PC-9 (cell line): ENCODE measurements at regions of chr7 and their contacts with region 1.

Region 1: DNA sequence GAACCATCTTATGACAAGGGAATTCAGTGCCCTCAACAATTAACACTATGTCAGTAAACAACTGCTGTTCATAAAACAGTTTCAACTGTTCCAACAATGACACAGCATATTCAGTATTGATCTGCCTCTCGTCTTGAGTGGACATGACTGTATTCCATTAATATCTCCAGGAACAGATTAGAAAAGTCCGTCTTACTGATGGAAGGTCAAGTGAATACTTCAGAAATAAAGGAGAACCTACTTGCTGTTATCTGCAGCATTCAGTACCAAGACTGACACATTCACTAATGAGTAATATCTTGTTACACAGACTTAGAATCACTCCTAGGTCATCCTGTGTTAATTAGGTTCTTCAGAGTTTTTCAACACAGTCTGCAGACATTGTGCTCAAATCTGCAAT is 12.1 kb downstream of the KBTBD2 start:
- DNase-seq: no peak
- H3K4me3 ChIP-seq: no peak overlapping the region
- H3K27ac ChIP-seq: peak overlapping the region; percentile 28
- H3K4me1 ChIP-seq: peaks cover 15% of the 10 kb centered on the region
- H3K27me3 ChIP-seq: no peaks in the 10 kb centered on the region
- CTCF ChIP-seq: no peak

Region 2: GRCh38 chr7:32179567-32179966 is 699.9 kb before region 1 on chr7:
- CTCF ChIA-PET with region 1: interaction called, 27 read pairs
- POLR2A ChIA-PET with region 1: no interaction called
- intact Hi-C with region 1: no loop called
- DNase-seq: no peak
- H3K4me3 ChIP-seq: no peak overlapping the region
- H3K27ac ChIP-seq: no peak overlapping the region
- H3K4me1 ChIP-seq: no peaks in the 10 kb centered on the region
- H3K27me3 ChIP-seq: 0 out of 2 replicates have a peak, but pooled peaks cover 6% of the 10 kb centered on the region
- CTCF ChIP-seq: no peak

Region 3: GRCh38 chr7:32905175-32905662 is 25.8 kb after region 1 on chr7:
- CTCF ChIA-PET with region 1: no interaction called
- POLR2A ChIA-PET with region 1: no interaction called
- intact Hi-C with region 1: no loop called
- DNase-seq: peak; percentile 85 to 93
- H3K4me3 ChIP-seq: peak overlapping the region; percentile 66
- H3K27ac ChIP-seq: peak overlapping the region; percentile 39
- H3K4me1 ChIP-seq: peaks cover 9% of the 10 kb centered on the region; the same call in 1 of the 2 replicates
- H3K27me3 ChIP-seq: no peaks in the 10 kb centered on the region
- CTCF ChIP-seq: no peak

Region 4: DNA sequence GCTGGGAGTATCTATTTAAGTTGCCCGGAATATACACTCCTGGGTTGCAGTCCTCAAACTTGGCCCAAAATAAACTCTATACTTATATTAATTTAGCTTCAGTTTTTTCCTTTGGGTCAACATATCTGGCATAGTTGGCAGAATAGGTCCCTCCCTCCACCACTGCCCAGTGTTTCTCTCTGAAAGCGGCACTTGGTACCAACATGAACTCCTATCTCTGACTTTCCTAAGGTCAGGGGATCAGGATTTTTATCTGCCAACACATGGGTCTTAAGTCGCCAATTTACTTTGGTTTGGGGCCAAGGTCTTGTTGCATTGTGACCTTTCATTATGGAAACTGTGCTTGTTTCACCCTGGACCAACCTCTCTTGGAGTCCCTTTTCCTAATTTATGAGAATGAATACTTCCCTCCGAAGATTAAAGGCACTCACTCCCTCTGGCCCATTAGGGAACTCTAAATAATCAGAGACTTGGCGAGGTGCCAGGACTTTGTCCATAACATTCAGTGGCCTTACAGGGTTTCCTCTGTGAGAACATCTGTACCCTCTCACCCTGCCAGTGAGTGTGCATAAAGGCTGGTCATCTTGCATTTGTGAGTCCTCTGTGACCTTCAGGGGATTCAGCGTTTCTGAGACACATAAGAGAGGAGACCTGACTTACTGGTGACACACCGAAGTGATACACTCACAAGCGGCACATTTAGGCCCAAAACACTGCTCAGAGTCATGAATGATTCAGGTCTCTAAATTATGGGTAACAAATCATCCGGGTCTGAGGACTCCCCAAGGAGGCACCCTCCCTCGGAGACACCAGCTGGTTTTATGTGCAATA is 58.1 kb after region 1 on chr7:
- CTCF ChIA-PET with region 1: no interaction called
- POLR2A ChIA-PET with region 1: interaction called, 10 read pairs
- intact Hi-C with region 1: no loop called
- DNase-seq: peak in 1 of 2 experiments; percentile 15
- H3K4me3 ChIP-seq: no peak overlapping the region
- H3K27ac ChIP-seq: no peak overlapping the region
- H3K4me1 ChIP-seq: peaks cover 10% of the 10 kb centered on the region
- H3K27me3 ChIP-seq: no peaks in the 10 kb centered on the region
- CTCF ChIP-seq: no peak

Region 5: DNA sequence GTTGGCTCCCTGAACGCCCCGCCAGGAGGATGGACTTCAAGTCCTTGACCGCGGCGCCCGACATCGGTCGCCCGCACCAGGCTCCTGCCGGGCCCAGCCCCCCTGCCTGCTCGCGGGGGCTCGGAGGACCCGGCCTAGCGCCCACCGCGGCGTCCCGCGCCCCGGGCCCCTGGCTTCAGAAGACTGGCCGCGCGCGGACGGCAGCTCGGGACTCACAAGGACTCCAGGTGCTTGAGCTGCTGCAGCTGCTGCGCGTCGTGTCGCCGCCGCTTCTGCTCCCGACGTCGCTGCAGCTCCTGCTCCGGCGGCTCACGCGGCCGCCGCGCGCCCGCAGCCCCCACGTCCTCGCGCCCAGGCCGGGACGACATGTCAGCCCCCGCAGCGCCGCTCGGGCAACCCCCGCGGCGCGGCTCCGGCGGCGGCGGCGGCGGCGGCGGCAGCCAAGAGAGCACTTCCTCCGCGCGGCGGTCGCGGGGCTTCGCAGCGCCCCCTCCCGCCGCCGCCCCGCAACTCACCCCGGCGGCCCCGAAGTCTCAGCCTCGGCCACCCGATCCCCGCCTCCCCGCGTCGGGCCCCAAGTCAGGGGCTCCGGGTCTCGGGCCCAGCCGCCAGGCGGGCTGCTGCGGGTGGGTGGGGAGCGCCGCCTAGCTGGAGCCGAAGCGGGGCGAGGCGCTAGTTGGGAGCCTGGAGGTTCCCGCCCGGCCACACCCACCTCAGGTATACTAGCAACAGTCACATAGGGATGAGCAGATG is 229.7 kb after region 1 on chr7 and contains the start of gene RP9:
- CTCF ChIA-PET with region 1: no interaction called
- POLR2A ChIA-PET with region 1: no interaction called
- intact Hi-C with region 1: no loop called
- DNase-seq: peak in 1 of 2 experiments; percentile 80
- H3K4me3 ChIP-seq: peak within 1 kb of the TSS; percentile 69
- H3K27ac ChIP-seq: peak within 1 kb of the TSS; percentile 4
- H3K4me1 ChIP-seq: peaks cover 24% of the 10 kb centered on the region
- H3K27me3 ChIP-seq: 0 out of 2 replicates have a peak, but pooled peaks cover 10% of the 10 kb centered on the region
- CTCF ChIP-seq: peak; percentile 62; the same call in 1 of the 2 replicates
- total RNA-seq, gene RP9: 15.4 and 22.1 TPM in 2 replicates